GM18951 (cell line): ENCODE measurements at regions of chr19 and their contacts with region 1.

Region 1: GRCh38 chr19:54937926-54938325 is 9.4 kb downstream of the NLRP7 start:
- POLR2A ChIP-seq: no peak

Region 2: GRCh38 chr19:54481322-54481930 is 456.5 kb before region 1 on chr19:
- in situ Hi-C with region 1: loop called (anchors 25 kb)
- POLR2A ChIP-seq: no peak

Region 3: GRCh38 chr19:54561840-54562239 is 376.1 kb before region 1 on chr19:
- in situ Hi-C with region 1: no loop called
- POLR2A ChIP-seq: no peak